Dorsolateral prefrontal cortex (tissue), 120 donors: ENCODE measurements at regions of chr1 and their contacts with region 1.

Region 1: GRCh38 chr1:234722904-234723720 is 113.1 kb upstream of the IRF2BP2 start:
- DNase-seq: peak in 7 of 10 donors; percentile 51 to 76 (median 62)
- H3K4me3 ChIP-seq: peak overlapping the region in 42 of 59 donors; percentile 4 to 52 (median 28)
- H3K27ac ChIP-seq: peak overlapping the region; percentile 60 to 100 (median 98)
- H3K27me3 ChIP-seq: no peaks in the 10 kb centered on the region
- CTCF ChIP-seq: no peak

Region 2: GRCh38 chr1:234486498-234487448 is 236.3 kb before region 1 on chr1:
- intact Hi-C with region 1: loop called in 1 of 2 experiments (anchors 5 kb)
- DNase-seq: peak in 5 of 10 donors; percentile 43 to 62 (median 52)
- H3K4me3 ChIP-seq: peak overlapping the region in 46 of 59 donors; percentile 3 to 55 (median 35)
- H3K27ac ChIP-seq: peak overlapping the region in 57 of 59 donors; percentile 10 to 87 (median 69)
- H3K27me3 ChIP-seq: no peaks in the 10 kb centered on the region
- CTCF ChIP-seq: peak; percentile 64 to 89 (median 79)

Region 3: GRCh38 chr1:234610348-234611152 is 112.6 kb before region 1 on chr1:
- intact Hi-C with region 1: loop called (anchors 1 kb)
- DNase-seq: peak; percentile 90 to 95 (median 93)
- H3K4me3 ChIP-seq: peak overlapping the region; percentile 50 to 89 (median 71)
- H3K27ac ChIP-seq: peak overlapping the region; percentile 94 to 100 (median 99)
- H3K27me3 ChIP-seq: no peaks in the 10 kb centered on the region
- CTCF ChIP-seq: peak in 12 of 56 donors; percentile 3 to 39 (median 21)

Region 4: GRCh38 chr1:234683861-234684632 is 39.1 kb before region 1 on chr1:
- intact Hi-C with region 1: loop called (anchors 5 kb)
- DNase-seq: peak in 1 of 10 donors; percentile 22
- H3K4me3 ChIP-seq: peak overlapping the region in 2 of 59 donors; percentile 9 to 28
- H3K27ac ChIP-seq: peak overlapping the region in 30 of 59 donors; percentile 4 to 78 (median 42)
- H3K27me3 ChIP-seq: no peaks in the 10 kb centered on the region
- CTCF ChIP-seq: no peak

Region 5: DNA sequence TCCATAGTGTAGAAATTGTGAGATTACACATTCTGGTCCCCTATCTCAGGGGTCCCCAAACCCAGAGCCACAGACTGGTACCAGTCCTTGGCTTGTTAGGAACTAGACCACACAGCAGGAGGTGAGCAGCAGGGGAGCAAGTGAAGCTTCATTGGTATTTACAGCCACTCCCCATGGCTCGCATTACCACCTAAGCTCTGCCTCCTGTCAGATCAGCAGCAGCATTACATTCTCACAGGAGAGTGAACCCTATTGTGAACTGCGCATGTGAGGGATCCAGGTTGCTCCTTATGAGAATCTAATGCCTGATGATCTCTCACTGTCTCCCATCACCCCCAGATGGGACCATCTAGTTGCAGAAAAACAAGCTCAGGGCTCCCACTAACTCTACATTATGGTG is 116.6 kb after region 1 on chr1:
- intact Hi-C with region 1: loop called (anchors 2 to 5 kb)
- DNase-seq: no peak
- H3K4me3 ChIP-seq: no peak overlapping the region
- H3K27ac ChIP-seq: peak overlapping the region in 8 of 59 donors; percentile 10 to 83 (median 72)
- H3K27me3 ChIP-seq: no peaks in the 10 kb centered on the region
- CTCF ChIP-seq: no peak

Region 6: GRCh38 chr1:234978397-234979295 is 255.5 kb after region 1 on chr1:
- intact Hi-C with region 1: loop called (anchors 5 kb)
- DNase-seq: peak in 9 of 10 donors; percentile 73 to 88 (median 78)
- H3K4me3 ChIP-seq: peak overlapping the region in 20 of 59 donors; percentile 2 to 42 (median 11)
- H3K27ac ChIP-seq: peak overlapping the region; percentile 80 to 98 (median 94)
- H3K27me3 ChIP-seq: no peaks in the 10 kb centered on the region
- CTCF ChIP-seq: peak in 28 of 56 donors; percentile 5 to 57 (median 26)